ENCODE measurements at regions of chr11 and their contacts with region 1.

Region 1: DNA sequence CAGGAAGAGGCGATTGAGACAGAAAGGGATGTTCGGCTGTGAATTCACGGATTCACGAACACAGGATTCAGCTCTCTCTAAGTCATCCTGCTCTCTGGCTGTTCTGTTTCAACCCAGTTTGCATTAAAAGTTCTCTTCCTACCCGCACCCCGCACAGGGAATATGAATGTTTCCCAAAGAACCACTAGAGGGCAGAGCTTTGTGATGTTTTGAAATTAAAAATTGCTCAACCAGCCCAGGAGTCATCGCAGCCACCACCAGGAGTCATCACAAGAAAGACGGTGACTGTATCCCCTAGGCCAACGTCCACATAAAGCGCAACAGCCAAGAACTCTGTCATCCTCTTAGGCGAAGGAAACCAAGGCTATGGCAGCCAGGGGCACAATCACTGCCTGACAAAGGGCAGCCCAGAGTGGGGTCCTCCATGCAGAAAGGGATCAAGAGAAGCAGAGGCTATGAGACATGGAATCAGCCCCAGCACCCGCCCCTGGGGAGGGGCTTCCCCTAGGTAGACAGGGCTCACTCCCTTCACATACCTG is 122.4 kb downstream of the WT1 start:
- DNase-seq: peak; percentile 63
- ATAC-seq: peak; percentile 98
- H3K4me3 ChIP-seq: peak overlapping the region in 1 of 2 experiments; percentile 11; a peak in 2 of 4 replicates
- H3K27ac ChIP-seq: no peak overlapping the region
- H3K4me1 ChIP-seq: peaks cover 6 to 11% of the 10 kb centered on the region in 2 experiments; a peak in 2 of 4 replicates
- H3K27me3 ChIP-seq: no peaks in the 10 kb centered on the region
- CTCF ChIP-seq: peak; percentile 77 to 94 (median 85)
- POLR2A ChIP-seq: no peak
- RAD21 ChIP-seq: peak; percentile 54

Region 2: DNA sequence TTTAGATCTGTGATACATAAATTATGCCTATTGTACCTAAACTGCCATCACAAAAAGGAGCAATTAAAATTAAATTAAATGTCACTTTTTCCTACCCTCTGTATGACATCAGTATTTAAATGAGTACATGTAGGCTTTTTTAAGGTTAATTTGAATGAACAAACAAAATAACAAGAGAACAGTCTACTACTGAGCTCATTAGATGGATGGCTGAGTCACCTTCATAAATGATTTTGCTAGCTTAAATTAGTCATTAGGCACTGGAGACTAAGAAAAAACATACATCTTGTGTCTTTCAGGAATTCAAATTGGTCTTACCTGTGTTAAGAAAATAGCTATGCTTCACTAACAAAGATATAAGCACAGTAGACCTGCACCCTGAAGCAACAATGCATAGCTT is 68.5 kb before region 1 on chr11:
- CTCF ChIA-PET with region 1: no interaction called
- POLR2A ChIA-PET with region 1: no interaction called
- RAD21 ChIA-PET with region 1: no interaction called
- intact Hi-C with region 1: no loop called
- DNase-seq: no peak
- ATAC-seq: no peak
- H3K4me3 ChIP-seq: no peak overlapping the region
- H3K27ac ChIP-seq: no peak overlapping the region
- H3K4me1 ChIP-seq: no peaks in the 10 kb centered on the region
- H3K27me3 ChIP-seq: no peaks in the 10 kb centered on the region
- CTCF ChIP-seq: no peak
- POLR2A ChIP-seq: no peak
- RAD21 ChIP-seq: no peak

Region 3: GRCh38 chr11:32302821-32303220 is 10.1 kb before region 1 on chr11:
- CTCF ChIA-PET with region 1: interaction called, 12 read pairs
- POLR2A ChIA-PET with region 1: no interaction called
- RAD21 ChIA-PET with region 1: no interaction called
- intact Hi-C with region 1: no loop called
- DNase-seq: no peak
- ATAC-seq: no peak
- H3K4me3 ChIP-seq: no peak overlapping the region
- H3K27ac ChIP-seq: no peak overlapping the region
- H3K4me1 ChIP-seq: no peaks in the 10 kb centered on the region
- H3K27me3 ChIP-seq: no peaks in the 10 kb centered on the region
- CTCF ChIP-seq: no peak
- POLR2A ChIP-seq: no peak
- RAD21 ChIP-seq: no peak

Region 4: DNA sequence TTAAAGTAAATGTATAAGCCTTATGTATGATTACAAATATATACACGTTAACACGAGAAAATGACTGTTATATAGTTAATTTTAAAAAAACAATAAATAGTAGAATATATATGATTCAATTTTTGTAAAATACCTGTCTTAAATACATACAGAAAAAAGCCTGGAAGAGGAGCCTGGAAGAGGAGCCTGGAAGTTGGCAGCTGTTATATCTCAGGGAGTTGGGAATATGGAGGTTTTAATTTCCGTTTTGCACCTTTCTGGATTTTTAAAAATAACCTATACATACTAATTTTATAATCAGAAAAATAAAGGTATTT is 10.8 kb after region 1 on chr11:
- CTCF ChIA-PET with region 1: interaction called, 18 read pairs
- POLR2A ChIA-PET with region 1: no interaction called
- RAD21 ChIA-PET with region 1: no interaction called
- intact Hi-C with region 1: no loop called
- DNase-seq: no peak
- ATAC-seq: no peak
- H3K4me3 ChIP-seq: no peak overlapping the region
- H3K27ac ChIP-seq: no peak overlapping the region
- H3K4me1 ChIP-seq: no peaks in the 10 kb centered on the region
- H3K27me3 ChIP-seq: no peaks in the 10 kb centered on the region
- CTCF ChIP-seq: no peak
- POLR2A ChIP-seq: no peak
- RAD21 ChIP-seq: no peak

Region 5: GRCh38 chr11:32385998-32386397 is 73.1 kb after region 1 on chr11:
- CTCF ChIA-PET with region 1: no interaction called
- POLR2A ChIA-PET with region 1: no interaction called
- RAD21 ChIA-PET with region 1: no interaction called
- intact Hi-C with region 1: no loop called
- DNase-seq: peak; percentile 38
- ATAC-seq: peak; percentile 99
- H3K4me3 ChIP-seq: no peak overlapping the region
- H3K27ac ChIP-seq: no peak overlapping the region
- H3K4me1 ChIP-seq: peaks cover 0 to 4% of the 10 kb centered on the region in 2 experiments; a peak in 1 of 4 replicates
- H3K27me3 ChIP-seq: peaks cover 27% of the 10 kb centered on the region; the same call in 1 of the 2 replicates
- CTCF ChIP-seq: peak; percentile 46 to 77 (median 67); a peak in 5 of 6 replicates
- POLR2A ChIP-seq: no peak
- RAD21 ChIP-seq: peak; percentile 60

Region 6: GRCh38 chr11:32615422-32615821 is 302.5 kb after region 1 on chr11:
- CTCF ChIA-PET with region 1: no interaction called
- POLR2A ChIA-PET with region 1: no interaction called
- RAD21 ChIA-PET with region 1: no interaction called
- intact Hi-C with region 1: loop called (anchors 2 kb)
- DNase-seq: no peak
- ATAC-seq: no peak
- H3K4me3 ChIP-seq: no peak overlapping the region
- H3K27ac ChIP-seq: no peak overlapping the region
- H3K4me1 ChIP-seq: no peaks in the 10 kb centered on the region
- H3K27me3 ChIP-seq: no peaks in the 10 kb centered on the region
- CTCF ChIP-seq: peak in 2 of 3 experiments; percentile 37 to 43; a peak in 3 of 6 replicates
- POLR2A ChIP-seq: no peak
- RAD21 ChIP-seq: peak; percentile 56